Left cardiac atrium (tissue), 4 donors: ENCODE measurements at regions of chr3 and their contacts with region 1.

Region 1: GRCh38 chr3:130892759-130893375 is 1.0 kb upstream of the ATP2C1 start:
- DNase-seq: peak; percentile 52
- ATAC-seq: peak; percentile 70 to 73

Region 2: GRCh38 chr3:130759699-130760338 is 133.0 kb before region 1 on chr3:
- intact Hi-C with region 1: loop called (anchors 2 to 5 kb)
- DNase-seq: peak; percentile 29
- ATAC-seq: peak; percentile 69 to 76

Region 3: GRCh38 chr3:130800829-130801228 is 92.0 kb before region 1 on chr3:
- intact Hi-C with region 1: no loop called
- DNase-seq: no peak
- ATAC-seq: no peak